Activated T-helper 1 cell treated with anti-CD3 and anti-CD28 coated beads, Interleukin-12 subunit alpha, Interleukin-12 subunit beta, Interleukin-2, Interleukin-4 antibody, amounts not matched to agents 30 ng/mL and 10 ng/mL and 1 ng/mL, durations not matched to agents 14 hours and 24 hours and 36 hours (primary cell): ENCODE measurements at regions of chr17 and their contacts with region 1.

Region 1: GRCh38 chr17:30336369-30337171 is 2.7 kb upstream of the TMIGD1 start:
- DNase-seq: peak; percentile 47
- H3K4me3 Mint-ChIP-seq: no peak overlapping the region
- H3K27ac Mint-ChIP-seq: no peak overlapping the region
- H3K4me1 Mint-ChIP-seq: peaks cover 42% of the 10 kb centered on the region
- H3K27me3 Mint-ChIP-seq: peaks cover 3% of the 10 kb centered on the region

Region 2: DNA sequence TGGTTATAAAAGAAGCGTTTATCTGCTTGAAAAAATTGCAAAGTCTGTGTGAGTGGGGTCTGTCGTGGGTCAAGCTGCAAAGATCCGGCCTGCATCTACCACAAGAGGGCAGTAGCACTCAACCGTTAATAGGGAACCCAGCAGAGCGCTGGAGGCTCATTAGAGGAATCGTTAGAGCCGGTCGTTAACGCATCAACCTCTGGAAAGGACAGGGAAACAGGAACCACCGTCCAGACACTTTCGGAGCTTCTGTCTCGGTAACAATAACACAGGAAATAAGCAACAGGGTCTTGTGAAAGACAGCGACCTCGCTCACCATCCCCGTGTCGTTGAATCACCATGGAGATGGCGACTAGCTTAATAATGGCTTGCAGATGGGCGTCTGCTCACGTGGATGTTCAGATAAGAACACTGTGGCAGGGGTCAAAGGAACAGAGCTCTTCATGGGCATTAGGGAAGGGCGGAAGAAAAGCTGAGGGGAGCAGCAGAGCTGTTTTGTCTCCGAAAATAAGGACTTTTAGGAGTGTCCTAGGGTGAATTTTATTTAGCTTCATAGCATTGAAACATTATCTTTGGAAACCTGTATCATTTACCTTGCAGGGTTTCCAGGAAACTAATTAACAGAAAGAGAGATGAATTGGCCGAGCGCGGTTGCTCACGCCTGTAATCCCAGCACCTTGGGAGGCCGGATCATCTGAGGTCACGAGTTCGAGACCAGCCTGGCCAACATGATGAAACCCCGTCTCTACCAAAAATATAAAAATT is 231.8 kb before region 1 on chr17:
- intact Hi-C with region 1: loop called (anchors 1 kb)
- DNase-seq: peak; percentile 58
- H3K4me3 Mint-ChIP-seq: peak overlapping the region; percentile 82
- H3K27ac Mint-ChIP-seq: no peak overlapping the region
- H3K4me1 Mint-ChIP-seq: peaks cover 6% of the 10 kb centered on the region
- H3K27me3 Mint-ChIP-seq: peaks cover 17% of the 10 kb centered on the region

Region 3: GRCh38 chr17:30173649-30174048 is 162.9 kb before region 1 on chr17:
- intact Hi-C with region 1: loop called (anchors 5 kb)
- DNase-seq: no peak
- H3K4me3 Mint-ChIP-seq: no peak overlapping the region
- H3K27ac Mint-ChIP-seq: no peak overlapping the region
- H3K4me1 Mint-ChIP-seq: peaks cover 23% of the 10 kb centered on the region
- H3K27me3 Mint-ChIP-seq: no peaks in the 10 kb centered on the region

Region 4: DNA sequence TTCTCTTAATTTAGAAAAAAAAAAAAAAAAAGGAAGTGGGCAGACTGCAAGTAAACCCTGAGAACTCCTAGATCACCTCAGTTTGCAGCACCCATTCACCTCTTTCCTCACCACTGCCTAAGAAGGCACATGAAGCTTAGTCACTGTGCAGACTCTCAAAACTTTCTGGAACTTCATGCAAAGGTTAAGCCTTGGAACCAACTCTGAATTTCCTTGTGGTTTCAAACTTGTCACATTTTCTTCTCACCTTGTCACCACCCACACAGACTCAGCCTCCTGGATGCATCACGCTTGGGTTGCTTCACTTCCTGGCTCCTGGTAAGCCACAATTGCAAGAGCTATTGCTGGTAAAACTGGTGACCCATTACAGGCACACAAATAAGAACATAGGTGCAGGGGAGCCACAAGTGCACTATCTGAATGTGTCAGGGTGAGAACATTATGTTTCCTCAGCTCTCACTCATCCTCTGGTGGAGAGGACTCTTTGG is 27.2 kb after region 1 on chr17:
- intact Hi-C with region 1: loop called (anchors 1 kb)
- DNase-seq: peak; percentile 84
- H3K4me3 Mint-ChIP-seq: peak overlapping the region; percentile 44
- H3K27ac Mint-ChIP-seq: peak overlapping the region; percentile 90
- H3K4me1 Mint-ChIP-seq: peaks cover 36% of the 10 kb centered on the region
- H3K27me3 Mint-ChIP-seq: no peaks in the 10 kb centered on the region

Region 5: DNA sequence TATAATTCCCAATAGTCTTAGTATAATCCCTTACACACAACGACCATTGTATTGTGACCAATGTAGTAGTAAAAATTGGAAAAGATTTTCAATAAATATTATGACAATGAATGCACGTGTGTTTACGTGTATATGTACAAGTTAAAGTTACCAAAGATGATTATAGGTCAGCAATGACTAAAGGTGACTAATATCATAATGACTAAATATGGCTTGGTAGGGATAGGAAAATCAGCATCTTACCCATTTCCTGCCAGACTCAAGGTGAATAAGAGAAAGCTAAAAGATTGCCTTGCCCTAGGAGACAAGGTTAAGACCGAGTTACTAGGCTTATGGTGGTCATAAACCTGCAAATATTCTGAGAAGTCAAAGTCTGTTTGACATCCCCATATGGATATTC is 76.5 kb after region 1 on chr17:
- intact Hi-C with region 1: loop called (anchors 1 kb)
- DNase-seq: no peak
- H3K4me3 Mint-ChIP-seq: no peak overlapping the region
- H3K27ac Mint-ChIP-seq: peak overlapping the region; percentile 41
- H3K4me1 Mint-ChIP-seq: peaks cover 34% of the 10 kb centered on the region
- H3K27me3 Mint-ChIP-seq: no peaks in the 10 kb centered on the region

Region 6: GRCh38 chr17:30796016-30796415 is 459.4 kb after region 1 on chr17:
- intact Hi-C with region 1: loop called (anchors 2 kb)
- DNase-seq: no peak
- H3K4me3 Mint-ChIP-seq: no peak overlapping the region
- H3K27ac Mint-ChIP-seq: peak overlapping the region; percentile 80
- H3K4me1 Mint-ChIP-seq: peaks cover 14% of the 10 kb centered on the region
- H3K27me3 Mint-ChIP-seq: no peaks in the 10 kb centered on the region